ENCODE measurements at regions of chr3 and their contacts with region 1.

Region 1: DNA sequence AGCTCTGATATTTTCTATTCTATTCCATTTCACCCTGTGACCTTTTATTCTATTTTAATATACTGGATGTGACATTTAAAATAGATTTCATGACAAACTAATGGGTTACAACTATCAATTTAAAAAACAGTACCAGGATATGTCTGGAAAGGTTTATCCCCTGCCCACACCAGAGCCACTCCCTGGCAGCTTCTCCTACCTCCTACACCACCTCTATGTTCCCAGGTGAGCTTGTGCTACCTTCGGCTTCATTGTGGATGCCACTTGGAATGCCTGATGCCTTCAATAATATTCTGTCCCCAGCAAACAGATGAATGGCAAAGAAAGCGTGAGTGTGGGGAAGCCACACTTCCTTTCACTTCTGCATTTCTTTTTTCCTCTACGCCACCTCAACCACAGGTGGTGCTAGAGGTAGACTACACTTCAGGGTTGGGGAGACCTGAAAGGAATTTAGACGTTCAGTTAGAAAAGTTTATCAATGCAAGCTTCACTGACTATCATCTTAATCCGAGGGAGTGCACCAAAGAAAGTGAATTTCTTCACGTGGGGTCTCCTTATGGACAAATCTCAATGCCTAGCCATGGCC is 213.0 kb downstream of the SSR3 start:
- DNase-seq: peak; percentile 58
- CTCF ChIP-seq: peak; percentile 31

Region 2: DNA sequence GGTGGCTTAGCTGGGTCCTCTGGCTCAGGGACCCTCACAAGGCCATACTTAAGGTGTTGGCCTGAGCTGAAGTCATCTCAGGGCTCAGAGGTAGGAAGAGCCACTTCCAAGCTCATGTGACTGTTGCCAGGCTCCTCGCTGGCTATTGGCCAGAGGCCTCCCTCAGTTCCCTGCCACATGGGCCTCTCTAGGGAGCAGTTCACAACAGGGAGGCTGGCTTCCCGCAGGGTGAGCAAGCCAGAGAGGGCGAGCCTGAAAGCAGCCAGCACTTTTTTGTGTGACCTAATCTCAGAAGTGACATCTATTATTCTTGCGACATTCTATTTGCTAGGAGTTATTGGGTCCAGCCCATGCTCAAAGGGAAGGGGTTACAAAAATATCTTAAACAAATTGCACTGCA is 11.6 kb after region 1 on chr3:
- CTCF ChIA-PET with region 1: interaction called, 28 read pairs
- POLR2A ChIA-PET with region 1: no interaction called
- DNase-seq: no peak
- CTCF ChIP-seq: no peak

Region 3: GRCh38 chr3:156997351-156997750 is 655.4 kb after region 1 on chr3:
- CTCF ChIA-PET with region 1: no interaction called
- POLR2A ChIA-PET with region 1: no interaction called
- DNase-seq: no peak
- CTCF ChIP-seq: no peak

Measured in GM10248 (cell line).